Naive thymus-derived CD8-positive, alpha-beta T cell (primary cell): ENCODE measurements at regions of chr22 and their contacts with region 1.

Region 1: DNA sequence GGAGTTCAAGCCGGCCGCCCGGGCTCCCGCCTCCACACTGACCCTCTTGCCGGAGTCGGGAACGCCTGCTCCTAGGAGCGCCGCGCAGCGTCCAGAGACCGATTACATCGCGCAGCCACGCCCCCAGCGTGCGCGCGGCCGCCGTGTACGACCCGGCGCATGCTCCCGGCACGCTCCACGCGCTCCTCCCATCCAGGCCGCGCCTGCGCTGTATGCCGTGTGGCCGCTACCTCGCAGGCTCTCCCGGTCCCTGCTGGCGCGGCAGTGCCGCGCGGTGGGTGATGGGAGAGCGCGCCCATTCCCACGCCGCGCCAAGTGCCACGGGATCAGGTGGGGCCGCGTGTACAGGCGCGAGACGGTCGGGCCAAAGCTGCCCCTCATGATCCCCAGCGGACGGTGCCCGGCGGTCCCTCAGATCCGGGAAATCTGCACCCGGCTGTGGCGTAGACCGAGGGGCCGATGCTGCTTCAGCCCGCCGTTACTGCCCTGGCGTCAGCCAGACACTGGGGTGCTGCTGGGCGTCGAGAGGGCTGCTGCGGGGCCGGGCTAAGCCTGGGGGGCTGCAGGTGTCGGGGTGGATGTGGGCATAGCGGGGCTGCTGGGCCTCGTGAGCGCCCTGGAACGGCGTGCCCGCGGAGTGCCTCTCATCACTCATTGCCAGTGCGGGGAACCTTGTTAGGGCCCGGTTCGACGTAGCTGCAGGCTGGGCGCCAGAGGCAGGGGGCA is at the starts of genes GNB1L and RTL10:
- DNase-seq: peak; percentile 89 to 97 (median 94)
- ATAC-seq: peak; percentile 87 to 91
- H3K4me3 Mint-ChIP-seq: peak within 1 kb of the TSS; percentile 92 to 99 (median 96)
- H3K27ac Mint-ChIP-seq: peak within 1 kb of the TSS; percentile 92 to 99 (median 95)
- H3K4me1 Mint-ChIP-seq: peaks cover 24 to 66% (median 59%) of the 10 kb centered on the region in 4 donors
- H3K27me3 Mint-ChIP-seq: no peaks in the 10 kb centered on the region
- polyA plus RNA-seq, gene GNB1L: 12.2 to 18.7 (median 17.3) TPM
- polyA plus RNA-seq, gene RTL10: 7.0 to 14.3 (median 13.4) TPM

Region 2: GRCh38 chr22:19844377-19845053 is 10.4 kb before region 1 on chr22:
- POLR2A ChIA-PET with region 1: interaction called, 24 read pairs
- DNase-seq: peak in 3 of 10 donors; percentile 28 to 48 (median 43)
- ATAC-seq: peak; percentile 78 to 85
- H3K4me3 Mint-ChIP-seq: peak overlapping the region in 9 of 10 donors; percentile 63 to 83 (median 76)
- H3K27ac Mint-ChIP-seq: peak overlapping the region; percentile 71 to 94 (median 92)
- H3K4me1 Mint-ChIP-seq: peaks cover 25 to 47% (median 34%) of the 10 kb centered on the region in 4 donors
- H3K27me3 Mint-ChIP-seq: no peaks in the 10 kb centered on the region

Region 3: DNA sequence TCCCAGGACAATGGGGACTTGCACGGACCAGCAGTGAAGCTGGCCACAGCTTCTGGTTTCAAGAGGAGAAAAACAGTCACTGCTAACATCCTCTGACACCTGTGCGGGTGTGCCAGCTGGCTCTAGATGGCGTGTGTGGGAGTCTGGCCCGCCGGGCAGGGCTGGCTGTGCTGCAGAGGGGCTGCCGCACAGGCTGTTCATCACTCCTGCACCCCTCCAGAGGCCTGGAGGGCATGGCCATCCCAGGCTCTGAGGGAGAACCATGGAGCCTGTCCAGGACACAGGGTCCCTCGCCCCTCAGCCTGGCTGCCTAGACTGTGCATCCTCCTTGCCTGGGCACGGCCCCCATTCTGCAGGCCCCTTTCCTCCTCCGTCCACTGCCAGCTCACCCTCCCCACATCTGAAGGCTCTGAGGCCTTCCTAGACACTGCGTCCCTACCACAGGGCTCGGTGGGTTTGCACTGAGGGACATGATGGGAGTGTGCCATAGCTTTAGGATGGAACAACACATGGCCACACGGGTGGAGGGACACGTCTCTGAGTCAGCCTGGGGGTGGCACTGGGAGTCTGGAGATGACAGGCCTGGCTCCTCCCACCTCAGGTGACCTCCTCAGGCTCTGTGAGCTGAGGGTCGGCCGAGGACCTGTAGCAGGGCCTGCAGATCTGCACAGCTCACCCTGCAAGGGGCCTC is 41.9 kb after region 1 on chr22:
- POLR2A ChIA-PET with region 1: interaction called, 120 read pairs
- DNase-seq: peak in 7 of 10 donors; percentile 30 to 71 (median 43)
- ATAC-seq: peak; percentile 31 to 37
- H3K4me3 Mint-ChIP-seq: peak overlapping the region in 8 of 10 donors; percentile 19 to 69 (median 54)
- H3K27ac Mint-ChIP-seq: peak overlapping the region in 9 of 10 donors; percentile 66 to 100 (median 85)
- H3K4me1 Mint-ChIP-seq: peaks cover 22 to 62% (median 54%) of the 10 kb centered on the region in 4 donors
- H3K27me3 Mint-ChIP-seq: no peaks in the 10 kb centered on the region

Region 4: GRCh38 chr22:19916941-19917340 is 62.0 kb after region 1 on chr22:
- POLR2A ChIA-PET with region 1: no interaction called
- DNase-seq: no peak
- ATAC-seq: no peak
- H3K4me3 Mint-ChIP-seq: no peak overlapping the region
- H3K27ac Mint-ChIP-seq: peak overlapping the region in 1 of 10 donors; percentile 43
- H3K4me1 Mint-ChIP-seq: peaks cover 0 to 8% (median 1%) of the 10 kb centered on the region in 4 donors
- H3K27me3 Mint-ChIP-seq: no peaks in the 10 kb centered on the region